Psoas muscle (tissue), 8 donors: ENCODE measurements at regions of chr19 and their contacts with region 1.

Region 1: GRCh38 chr19:8412783-8413628 is at the start of gene MARCHF2:
- DNase-seq: peak; percentile 97 to 99
- ATAC-seq: peak; percentile 99 to 100 (median 99)
- H3K4me3 ChIP-seq: peak within 1 kb of the TSS; percentile 92
- H3K27ac ChIP-seq: peak within 1 kb of the TSS; percentile 87
- H3K4me1 ChIP-seq: peaks cover 16% of the 10 kb centered on the region
- H3K27me3 ChIP-seq: no peaks in the 10 kb centered on the region
- CTCF ChIP-seq: peak; percentile 52
- total RNA-seq, gene MARCHF2: 47.7 to 56.0 (median 52.2) TPM

Region 2: DNA sequence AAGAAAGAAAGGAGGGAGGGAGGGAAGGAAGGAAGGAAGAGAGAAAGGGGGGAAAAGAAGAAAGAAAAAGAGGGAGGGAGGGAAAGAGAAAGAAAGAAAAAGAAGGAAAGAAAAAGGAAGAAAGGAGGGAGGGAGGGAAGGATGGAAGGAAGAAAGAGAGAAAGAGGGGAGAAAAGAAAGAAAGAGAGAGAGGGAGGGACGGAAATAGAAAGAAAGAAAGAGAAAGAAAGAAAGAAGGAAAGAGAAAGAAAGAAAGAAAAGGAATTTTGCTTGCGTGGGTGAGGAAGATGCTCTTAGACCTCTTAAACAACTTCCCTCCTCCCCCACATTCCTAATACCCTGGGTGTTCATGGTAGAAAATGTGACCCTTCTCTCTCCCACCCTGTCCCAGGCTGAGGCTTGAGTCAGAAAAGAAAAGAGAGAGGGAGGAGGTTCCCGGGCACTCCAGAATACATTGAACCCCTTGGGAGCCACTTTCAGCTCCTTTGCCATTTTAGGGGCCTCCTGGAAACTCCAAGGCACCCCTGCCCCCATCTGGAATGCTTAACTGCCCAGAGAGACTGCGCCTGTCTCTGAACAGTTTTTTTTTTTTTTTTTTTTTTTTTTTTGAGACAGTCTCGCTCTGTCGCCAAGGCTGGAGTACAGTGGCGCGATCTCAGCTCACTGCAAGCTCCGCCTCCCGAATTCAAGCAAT is 60.7 kb before region 1 on chr19:
- intact Hi-C with region 1: no loop called
- DNase-seq: peak in 1 of 2 donors; percentile 44
- ATAC-seq: peak in 1 of 4 donors; percentile 4
- H3K4me3 ChIP-seq: peak overlapping the region; percentile 9
- H3K27ac ChIP-seq: no peak overlapping the region
- H3K4me1 ChIP-seq: peaks cover 20% of the 10 kb centered on the region
- H3K27me3 ChIP-seq: no peaks in the 10 kb centered on the region
- CTCF ChIP-seq: no peak

Region 3: GRCh38 chr19:8444645-8445487 is 31.9 kb after region 1 on chr19 and contains the start of gene HNRNPM:
- intact Hi-C with region 1: loop called (anchors 2 to 5 kb)
- DNase-seq: peak; percentile 100
- ATAC-seq: peak; percentile 97 to 99 (median 98)
- H3K4me3 ChIP-seq: peak within 1 kb of the TSS; percentile 100
- H3K27ac ChIP-seq: peak within 1 kb of the TSS; percentile 99
- H3K4me1 ChIP-seq: peaks cover 37% of the 10 kb centered on the region
- H3K27me3 ChIP-seq: no peaks in the 10 kb centered on the region
- CTCF ChIP-seq: no peak
- total RNA-seq, gene HNRNPM: 73.2 to 92.2 (median 84.1) TPM

Region 4: GRCh38 chr19:8505680-8506401 is 92.8 kb after region 1 on chr19:
- intact Hi-C with region 1: loop called (anchors 1 to 2 kb)
- DNase-seq: peak; percentile 82 to 92
- ATAC-seq: peak; percentile 87 to 91 (median 90)
- H3K4me3 ChIP-seq: peak overlapping the region; percentile 73
- H3K27ac ChIP-seq: peak overlapping the region; percentile 53
- H3K4me1 ChIP-seq: peaks cover 11% of the 10 kb centered on the region
- H3K27me3 ChIP-seq: no peaks in the 10 kb centered on the region
- CTCF ChIP-seq: peak; percentile 84

Region 5: GRCh38 chr19:8536282-8536681 is 123.3 kb after region 1 on chr19:
- intact Hi-C with region 1: no loop called
- DNase-seq: no peak
- ATAC-seq: no peak
- H3K4me3 ChIP-seq: no peak overlapping the region
- H3K27ac ChIP-seq: no peak overlapping the region
- H3K4me1 ChIP-seq: no peaks in the 10 kb centered on the region
- H3K27me3 ChIP-seq: no peaks in the 10 kb centered on the region
- CTCF ChIP-seq: no peak

Region 6: DNA sequence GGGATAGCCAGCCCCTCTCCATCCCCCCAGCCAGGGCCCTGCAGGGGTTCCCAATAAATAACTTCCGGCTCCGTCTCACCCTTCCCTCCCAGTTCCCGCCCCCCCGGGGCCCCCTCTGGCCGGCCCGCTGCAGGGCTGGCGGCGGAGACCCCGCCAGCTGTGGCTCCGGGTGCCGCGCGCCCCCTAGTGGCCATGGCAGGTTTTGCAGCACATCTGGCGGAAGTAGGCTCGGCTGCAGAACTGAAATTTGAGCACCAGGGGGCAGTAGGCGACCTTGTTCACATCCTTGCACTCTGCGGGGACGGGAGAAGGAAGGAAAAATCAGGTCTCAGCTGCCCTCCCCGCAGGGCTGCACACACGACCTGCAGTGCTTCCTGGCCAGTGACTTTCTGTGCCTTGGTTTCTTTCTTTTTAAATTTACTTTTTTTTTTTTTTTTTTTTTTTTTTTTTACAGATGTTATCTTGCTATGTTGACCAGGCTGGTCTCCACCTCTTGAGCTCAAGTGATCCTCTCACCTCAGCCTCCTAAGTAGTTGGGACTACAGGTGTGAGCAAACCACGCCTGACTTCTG is 167.8 kb after region 1 on chr19:
- intact Hi-C with region 1: loop called in 1 of 2 experiments (anchors 5 kb)
- DNase-seq: peak; percentile 69 to 85
- ATAC-seq: peak; percentile 27 to 69 (median 51)
- H3K4me3 ChIP-seq: no peak overlapping the region
- H3K27ac ChIP-seq: no peak overlapping the region
- H3K4me1 ChIP-seq: no peaks in the 10 kb centered on the region
- H3K27me3 ChIP-seq: peaks cover 0 to 6% (median 4%) of the 10 kb centered on the region in 3 donors
- CTCF ChIP-seq: peak; percentile 84